Heart right ventricle (tissue), 16 donors: ENCODE measurements at regions of chr17 and their contacts with region 1.

Region 1: GRCh38 chr17:82830249-82830661 is 9.6 kb downstream of the ZNF750 start:
- DNase-seq: peak; percentile 81 to 90
- ATAC-seq: peak; percentile 87 to 92 (median 88)
- H3K4me3 ChIP-seq: peak overlapping the region in 9 of 10 donors; percentile 35 to 47 (median 39)
- H3K27ac ChIP-seq: peak overlapping the region; percentile 50 to 80 (median 64)
- H3K4me1 ChIP-seq: peaks cover 0 to 26% (median 11%) of the 10 kb centered on the region in 9 donors
- H3K27me3 ChIP-seq: no peaks in the 10 kb centered on the region
- CTCF ChIP-seq: no peak

Region 2: DNA sequence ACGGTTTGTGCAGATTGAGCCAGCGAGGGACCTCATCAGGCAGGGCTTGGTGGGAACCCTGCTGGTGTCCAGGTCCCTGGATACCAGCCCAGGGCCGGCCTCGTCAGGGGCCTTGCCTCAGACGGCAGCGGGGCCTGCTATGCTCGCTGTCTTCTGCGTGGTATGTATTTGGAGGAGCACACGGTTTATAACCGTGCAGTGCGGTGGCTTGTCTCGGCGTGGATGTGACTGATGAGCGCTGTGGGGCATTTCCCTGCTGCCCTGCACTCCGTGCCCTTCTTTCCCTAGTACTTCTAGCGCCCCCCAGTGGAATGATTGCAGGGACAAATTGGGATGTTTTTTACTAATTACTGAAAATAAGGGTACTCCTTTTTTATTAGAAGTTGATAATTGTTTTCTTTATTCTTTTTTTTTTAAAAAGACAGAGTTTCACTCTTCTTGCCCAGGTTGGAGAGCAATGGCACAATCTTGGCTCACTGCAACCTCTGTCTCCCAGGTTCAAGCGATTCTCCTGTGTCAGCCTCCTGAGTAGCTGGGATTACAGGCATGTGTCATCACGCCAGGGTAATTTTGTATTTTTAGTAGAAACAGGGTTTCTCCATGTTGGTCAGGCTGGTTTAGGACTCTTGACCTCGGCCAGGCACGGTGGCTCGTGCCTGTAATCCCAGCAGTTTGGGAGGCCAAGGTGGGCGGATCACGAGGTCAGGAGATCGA is 63.1 kb before region 1 on chr17:
- intact Hi-C with region 1: no loop called
- DNase-seq: peak in 1 of 2 donors; percentile 54
- ATAC-seq: peak in 7 of 8 donors; percentile 38 to 71 (median 56)
- H3K4me3 ChIP-seq: no peak overlapping the region
- H3K27ac ChIP-seq: no peak overlapping the region
- H3K4me1 ChIP-seq: peaks cover 0 to 3% (median 0%) of the 10 kb centered on the region in 9 donors
- H3K27me3 ChIP-seq: no peaks in the 10 kb centered on the region
- CTCF ChIP-seq: peak; percentile 29 to 65 (median 59)

Region 3: GRCh38 chr17:82794781-82795482 is 35.3 kb before region 1 on chr17:
- intact Hi-C with region 1: loop called in 1 of 10 experiments (anchors 5 kb)
- DNase-seq: peak in 1 of 2 donors; percentile 49
- ATAC-seq: peak; percentile 56 to 90 (median 80)
- H3K4me3 ChIP-seq: no peak overlapping the region
- H3K27ac ChIP-seq: peak overlapping the region; percentile 57 to 86 (median 72)
- H3K4me1 ChIP-seq: peaks cover 0 to 28% (median 20%) of the 10 kb centered on the region in 9 donors
- H3K27me3 ChIP-seq: no peaks in the 10 kb centered on the region
- CTCF ChIP-seq: no peak

Region 4: GRCh38 chr17:83189044-83190003 is 359.1 kb after region 1 on chr17:
- intact Hi-C with region 1: no loop called
- DNase-seq: peak in 1 of 2 donors; percentile 41
- ATAC-seq: peak; percentile 30 to 78 (median 62)
- H3K4me3 ChIP-seq: no peak overlapping the region
- H3K27ac ChIP-seq: peak overlapping the region in 1 of 10 donors; percentile 24
- H3K4me1 ChIP-seq: peaks cover 0 to 26% (median 8%) of the 10 kb centered on the region in 9 donors
- H3K27me3 ChIP-seq: no peaks in the 10 kb centered on the region
- CTCF ChIP-seq: no peak